GM12878 (cell line): ENCODE measurements at regions of chr9 and their contacts with region 1.

Region 1: DNA sequence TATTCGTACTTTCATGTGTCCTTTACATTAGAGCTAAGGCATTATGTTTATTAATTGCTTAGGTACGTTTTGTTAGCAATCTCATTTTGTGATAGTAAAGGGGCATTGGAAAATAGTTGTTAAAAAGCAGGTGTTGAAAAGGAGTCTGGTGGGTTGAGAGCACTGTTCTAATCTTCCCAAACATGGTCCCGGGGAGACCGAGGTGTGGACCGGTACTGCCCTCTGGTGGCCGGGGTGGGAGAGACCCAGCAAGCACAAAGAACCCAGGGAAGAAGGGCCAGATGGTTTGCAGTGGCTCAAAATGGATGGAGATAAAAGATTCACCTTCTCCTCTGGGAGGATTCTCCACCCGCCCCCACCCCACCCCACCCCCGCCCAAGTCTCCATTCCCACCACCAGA is 26.1 kb downstream of the IDNK start:
- DNase-seq: no peak
- ATAC-seq: peak; percentile 94
- H3K4me3 ChIP-seq: no peak overlapping the region
- H3K27ac ChIP-seq: no peak overlapping the region
- H3K4me1 ChIP-seq: peaks cover 5% of the 10 kb centered on the region
- H3K27me3 ChIP-seq: no peaks in the 10 kb centered on the region
- CTCF ChIP-seq: peak; percentile 65 to 78 (median 73)
- EP300 ChIP-seq: no peak
- POLR2A ChIP-seq: no peak
- RAD21 ChIP-seq: peak; percentile 63

Region 2: GRCh38 chr9:83537331-83538171 is 111.5 kb before region 1 on chr9:
- CTCF ChIA-PET with region 1: no interaction called
- POLR2A ChIA-PET with region 1: no interaction called
- RAD21 ChIA-PET with region 1: no interaction called
- SMC1A ChIA-PET with region 1: no interaction called
- in situ Hi-C with region 1: no loop called
- intact Hi-C with region 1: no loop called
- DNase-seq: no peak
- ATAC-seq: peak; percentile 37
- H3K4me3 ChIP-seq: no peak overlapping the region
- H3K27ac ChIP-seq: no peak overlapping the region
- H3K4me1 ChIP-seq: no peaks in the 10 kb centered on the region
- H3K27me3 ChIP-seq: peaks cover 0 to 5% of the 10 kb centered on the region in 2 experiments; a peak in 3 of 4 replicates
- CTCF ChIP-seq: no peak
- EP300 ChIP-seq: no peak
- POLR2A ChIP-seq: no peak
- RAD21 ChIP-seq: no peak

Region 3: DNA sequence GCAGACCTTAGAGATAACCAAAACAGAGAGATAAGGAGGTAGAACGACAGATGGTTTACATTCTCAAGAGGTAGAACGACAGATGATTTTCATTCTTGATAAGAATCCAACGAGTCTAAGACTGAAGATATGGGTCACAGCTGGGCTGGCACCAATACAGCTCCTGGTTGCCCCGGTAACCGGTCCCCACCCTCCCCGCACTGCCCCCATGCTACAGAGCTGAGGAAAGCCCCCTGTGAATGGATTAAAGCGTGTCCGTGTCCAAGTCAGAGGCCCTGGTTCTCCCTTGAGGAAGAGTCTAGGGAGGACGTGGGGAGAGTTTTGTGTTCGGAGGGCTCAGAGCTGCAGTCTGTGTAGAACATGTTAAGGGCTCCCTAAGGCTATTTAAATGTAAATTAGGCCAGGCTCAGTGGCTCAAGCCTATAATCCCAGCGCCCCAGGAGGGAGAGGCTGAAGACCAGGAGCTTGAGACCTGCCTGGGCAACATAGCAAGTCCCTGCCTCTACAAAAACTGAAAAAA is 18.1 kb before region 1 on chr9:
- CTCF ChIA-PET with region 1: interaction called, 9 read pairs
- POLR2A ChIA-PET with region 1: interaction called, 3 read pairs
- RAD21 ChIA-PET with region 1: interaction called, 3 read pairs
- SMC1A ChIA-PET with region 1: interaction called, 3 read pairs
- in situ Hi-C with region 1: no loop called
- intact Hi-C with region 1: loop called (anchors 1 kb)
- DNase-seq: no peak
- ATAC-seq: no peak
- H3K4me3 ChIP-seq: no peak overlapping the region
- H3K27ac ChIP-seq: no peak overlapping the region
- H3K4me1 ChIP-seq: 0 out of 2 replicates have a peak, but pooled peaks cover 3% of the 10 kb centered on the region
- H3K27me3 ChIP-seq: no peaks in the 10 kb centered on the region
- CTCF ChIP-seq: no peak
- EP300 ChIP-seq: no peak
- POLR2A ChIP-seq: no peak
- RAD21 ChIP-seq: no peak

Region 4: GRCh38 chr9:83636813-83637212 is 12.3 kb before region 1 on chr9:
- CTCF ChIA-PET with region 1: interaction called, 32 read pairs
- POLR2A ChIA-PET with region 1: no interaction called
- RAD21 ChIA-PET with region 1: interaction called, 7 read pairs
- SMC1A ChIA-PET with region 1: interaction called, 13 read pairs
- in situ Hi-C with region 1: no loop called
- intact Hi-C with region 1: no loop called
- DNase-seq: no peak
- ATAC-seq: peak; percentile 74
- H3K4me3 ChIP-seq: no peak overlapping the region
- H3K27ac ChIP-seq: no peak overlapping the region
- H3K4me1 ChIP-seq: no peaks in the 10 kb centered on the region
- H3K27me3 ChIP-seq: no peaks in the 10 kb centered on the region
- CTCF ChIP-seq: no peak
- EP300 ChIP-seq: no peak
- POLR2A ChIP-seq: no peak
- RAD21 ChIP-seq: no peak

Region 5: GRCh38 chr9:83662933-83663332 is 13.9 kb after region 1 on chr9:
- CTCF ChIA-PET with region 1: interaction called, 10 read pairs
- POLR2A ChIA-PET with region 1: interaction called, 3 read pairs
- RAD21 ChIA-PET with region 1: interaction called, 4 read pairs
- SMC1A ChIA-PET with region 1: interaction called, 3 read pairs
- in situ Hi-C with region 1: no loop called
- intact Hi-C with region 1: no loop called
- DNase-seq: no peak
- ATAC-seq: no peak
- H3K4me3 ChIP-seq: no peak overlapping the region
- H3K27ac ChIP-seq: no peak overlapping the region
- H3K4me1 ChIP-seq: peaks cover 16% of the 10 kb centered on the region
- H3K27me3 ChIP-seq: no peaks in the 10 kb centered on the region
- CTCF ChIP-seq: no peak
- EP300 ChIP-seq: no peak
- POLR2A ChIP-seq: no peak
- RAD21 ChIP-seq: no peak

Region 6: DNA sequence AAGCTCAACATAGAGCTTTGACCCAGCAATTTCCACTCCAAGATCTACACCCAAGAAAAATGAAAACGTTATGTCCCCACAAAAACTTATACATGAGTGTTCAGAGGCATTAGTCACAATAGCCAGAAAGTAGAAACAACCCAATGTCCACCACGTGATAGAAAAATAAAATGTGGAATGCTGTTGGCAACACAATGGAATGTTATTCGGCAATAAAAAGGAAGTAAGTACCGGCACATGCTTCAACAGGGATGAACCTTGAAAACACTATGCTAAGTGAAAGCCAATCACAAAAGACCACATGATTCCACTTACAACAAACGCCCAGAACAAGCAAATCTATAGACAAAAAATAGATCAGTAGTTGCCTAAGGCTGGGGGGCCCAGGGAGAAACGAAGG is 52.7 kb after region 1 on chr9:
- CTCF ChIA-PET with region 1: interaction called, 22 read pairs
- POLR2A ChIA-PET with region 1: interaction called, 9 read pairs
- RAD21 ChIA-PET with region 1: interaction called, 4 read pairs
- SMC1A ChIA-PET with region 1: interaction called, 6 read pairs
- in situ Hi-C with region 1: no loop called
- intact Hi-C with region 1: no loop called
- DNase-seq: no peak
- ATAC-seq: peak; percentile 26
- H3K4me3 ChIP-seq: peak overlapping the region; percentile 58
- H3K27ac ChIP-seq: peak overlapping the region; percentile 38; the same call in 1 of the 2 replicates
- H3K4me1 ChIP-seq: peaks cover 22% of the 10 kb centered on the region
- H3K27me3 ChIP-seq: no peaks in the 10 kb centered on the region
- CTCF ChIP-seq: no peak
- EP300 ChIP-seq: no peak
- POLR2A ChIP-seq: no peak
- RAD21 ChIP-seq: no peak

Region 7: DNA sequence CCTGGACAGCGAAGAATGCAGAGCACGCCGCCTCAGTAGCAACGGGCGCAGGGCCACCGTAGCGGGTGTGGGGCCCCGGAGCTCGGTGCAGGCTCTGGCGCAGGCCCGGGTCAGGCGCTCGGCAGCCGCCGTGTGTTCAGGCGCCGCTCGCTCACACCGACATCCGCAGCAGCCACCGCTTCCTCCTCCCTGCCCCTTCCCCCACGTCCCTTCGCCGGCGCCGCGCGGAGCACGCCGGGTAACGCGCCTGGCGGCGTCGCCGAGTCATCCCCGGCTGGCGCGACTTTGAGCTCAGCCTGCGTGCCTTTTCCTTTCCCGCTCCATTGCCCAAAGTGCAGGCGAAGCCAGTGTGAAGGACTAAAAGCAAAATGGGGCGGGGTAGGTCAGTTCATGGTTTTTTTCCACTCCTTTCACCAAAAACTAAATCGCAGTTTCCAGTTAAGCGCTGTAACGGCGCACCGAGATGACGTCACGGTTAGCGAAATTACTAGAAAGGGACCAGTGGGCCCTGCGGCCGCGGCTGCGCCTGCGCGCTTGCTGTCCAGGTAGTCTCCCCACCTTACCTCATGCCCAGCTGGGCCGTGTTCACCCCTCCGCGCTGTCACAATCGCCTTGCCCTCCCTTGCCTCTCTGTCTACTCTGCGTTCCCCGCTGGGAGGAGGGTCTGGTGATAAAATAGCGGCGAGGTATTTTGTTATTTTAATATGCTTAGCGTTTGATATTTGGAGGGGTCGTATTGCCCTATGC is 58.9 kb after region 1 on chr9 and contains the start of gene UBQLN1:
- CTCF ChIA-PET with region 1: interaction called, 22 read pairs
- POLR2A ChIA-PET with region 1: interaction called, 9 read pairs
- RAD21 ChIA-PET with region 1: interaction called, 4 read pairs
- SMC1A ChIA-PET with region 1: interaction called, 6 read pairs
- in situ Hi-C with region 1: no loop called
- intact Hi-C with region 1: no loop called
- DNase-seq: peak; percentile 72
- ATAC-seq: peak; percentile 86
- H3K4me3 ChIP-seq: peak within 1 kb of the TSS; percentile 90
- H3K27ac ChIP-seq: peak within 1 kb of the TSS; percentile 96
- H3K4me1 ChIP-seq: no peaks in the 10 kb centered on the region
- H3K27me3 ChIP-seq: no peaks in the 10 kb centered on the region
- CTCF ChIP-seq: no peak
- EP300 ChIP-seq: peak; percentile 20 to 53; a peak in 1 of 4 replicates
- POLR2A ChIP-seq: peak; percentile 96
- RAD21 ChIP-seq: no peak
- polyA plus RNA-seq, gene UBQLN1: 12.4 to 15.0 TPM

Region 8: GRCh38 chr9:83765376-83765775 is 116.3 kb after region 1 on chr9:
- CTCF ChIA-PET with region 1: no interaction called
- POLR2A ChIA-PET with region 1: no interaction called
- RAD21 ChIA-PET with region 1: no interaction called
- SMC1A ChIA-PET with region 1: no interaction called
- in situ Hi-C with region 1: no loop called
- intact Hi-C with region 1: no loop called
- DNase-seq: no peak
- ATAC-seq: no peak
- H3K4me3 ChIP-seq: no peak overlapping the region
- H3K27ac ChIP-seq: no peak overlapping the region
- H3K4me1 ChIP-seq: no peaks in the 10 kb centered on the region
- H3K27me3 ChIP-seq: no peaks in the 10 kb centered on the region
- CTCF ChIP-seq: no peak
- EP300 ChIP-seq: no peak
- POLR2A ChIP-seq: no peak
- RAD21 ChIP-seq: no peak

Region 9: DNA sequence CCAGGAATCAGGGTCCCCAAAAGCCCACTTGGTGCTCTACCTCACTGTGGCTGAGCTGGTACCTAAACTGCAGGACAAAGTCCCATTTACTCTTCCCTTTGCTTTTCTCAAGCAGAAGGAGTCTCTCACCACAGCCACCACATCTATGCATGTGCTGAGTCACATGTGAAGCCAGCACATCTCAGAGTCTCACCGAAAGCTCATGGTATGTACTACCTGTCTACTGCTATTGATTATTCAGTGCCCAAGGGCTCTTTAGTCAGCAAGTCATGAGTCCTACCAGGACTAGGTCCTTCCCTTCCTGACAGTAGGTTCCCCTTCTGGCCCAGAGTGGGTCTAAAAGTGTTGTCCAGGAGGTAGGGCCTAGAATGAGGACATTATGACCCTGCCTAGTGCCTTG is 889.8 kb after region 1 on chr9:
- CTCF ChIA-PET with region 1: no interaction called
- POLR2A ChIA-PET with region 1: no interaction called
- RAD21 ChIA-PET with region 1: no interaction called
- SMC1A ChIA-PET with region 1: no interaction called
- in situ Hi-C with region 1: no loop called
- intact Hi-C with region 1: no loop called
- DNase-seq: no peak
- ATAC-seq: no peak
- H3K4me3 ChIP-seq: no peak overlapping the region
- H3K27ac ChIP-seq: no peak overlapping the region
- H3K4me1 ChIP-seq: no peaks in the 10 kb centered on the region
- H3K27me3 ChIP-seq: no peaks in the 10 kb centered on the region
- CTCF ChIP-seq: no peak
- EP300 ChIP-seq: no peak
- POLR2A ChIP-seq: no peak
- RAD21 ChIP-seq: no peak